Posterior vena cava (tissue), 2 donors: ENCODE measurements at regions of chr7 and their contacts with region 1.

Region 1: DNA sequence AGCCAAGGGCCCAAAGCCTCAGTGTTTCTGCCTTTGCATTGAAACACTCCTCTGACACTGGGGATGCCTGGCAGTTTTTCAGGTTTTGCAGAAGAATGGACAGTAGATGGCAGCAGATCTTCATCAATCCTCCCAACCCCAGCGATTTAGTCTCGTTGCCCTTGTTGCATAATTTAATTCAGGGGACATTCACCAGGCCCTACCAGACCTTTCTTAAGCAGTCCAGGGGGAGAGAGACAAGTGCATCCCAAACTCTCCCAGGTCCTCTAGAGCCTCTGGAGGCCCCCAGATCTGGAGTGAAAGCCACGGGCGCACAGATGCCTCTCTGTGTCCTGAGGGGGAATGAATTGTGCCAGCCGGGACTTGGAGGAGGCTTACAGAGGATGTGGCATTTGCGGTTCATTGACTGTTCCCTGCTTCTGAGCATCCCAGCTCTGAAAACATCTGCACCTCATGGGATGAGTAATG is 29.6 kb downstream of the MINDY4 start:
- DNase-seq: no peak

Region 2: GRCh38 chr7:30750683-30751650 is 49.9 kb before region 1 on chr7:
- intact Hi-C with region 1: loop called in 1 of 2 experiments (anchors 5 kb)
- DNase-seq: peak; percentile 94

Region 3: GRCh38 chr7:30851651-30852307 is 51.0 kb after region 1 on chr7:
- intact Hi-C with region 1: loop called (anchors 5 to 10 kb)
- DNase-seq: peak; percentile 89

Region 4: DNA sequence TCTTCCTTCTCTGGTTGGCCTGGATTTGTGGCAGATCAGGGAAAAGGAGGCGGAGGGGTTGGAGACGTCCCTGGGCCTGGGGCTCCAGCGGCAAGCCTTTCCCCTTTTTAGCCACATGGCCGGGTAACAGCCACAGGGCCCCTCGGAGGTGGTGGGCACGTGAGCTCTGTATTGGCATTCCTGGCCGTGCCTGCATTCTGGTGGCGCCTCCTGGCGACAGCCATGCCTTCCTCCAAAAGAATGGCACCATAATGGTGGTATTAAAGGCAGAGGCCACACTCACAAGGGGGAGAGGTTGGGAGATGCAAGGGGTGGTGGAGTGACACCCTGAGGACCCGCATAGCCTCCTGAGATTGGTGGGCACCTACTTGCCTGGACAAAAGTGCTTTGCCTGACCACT is 107.9 kb after region 1 on chr7:
- intact Hi-C with region 1: loop called in 1 of 2 experiments (anchors 5 kb)
- DNase-seq: no peak

Region 5: DNA sequence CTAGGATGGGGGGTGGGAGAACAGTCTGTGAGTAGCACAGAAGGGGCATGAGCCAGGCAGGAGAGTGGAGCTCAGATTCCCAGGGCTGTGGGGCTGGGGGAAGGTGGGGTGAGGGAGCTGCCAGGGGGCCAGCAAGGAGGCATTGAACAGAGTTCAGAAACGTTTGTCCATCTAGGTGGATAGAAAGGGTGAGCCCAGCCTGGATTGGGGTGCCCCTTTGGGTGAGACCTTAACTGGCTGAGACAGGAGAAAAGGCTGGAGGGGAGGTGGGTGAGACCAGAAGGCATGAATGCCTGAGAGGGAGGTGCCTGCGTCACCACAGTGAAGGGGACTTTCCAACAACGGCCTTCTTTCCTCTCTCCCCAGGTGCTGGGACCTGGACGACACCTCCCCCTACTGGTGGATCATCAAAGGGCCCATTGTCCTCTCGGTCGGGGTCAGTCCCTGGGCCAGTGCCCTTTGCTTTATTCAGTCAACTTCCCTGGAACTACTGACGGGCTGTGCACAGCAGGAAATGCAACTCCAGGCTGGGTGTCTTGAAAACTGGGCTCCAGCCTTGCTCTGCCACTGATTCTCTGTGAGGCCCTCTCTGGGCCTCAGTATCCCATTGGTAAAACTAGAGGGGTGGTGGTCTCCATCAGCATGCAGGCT is 173.9 kb after region 1 on chr7:
- intact Hi-C with region 1: loop called (anchors 2 to 10 kb)
- DNase-seq: peak; percentile 85

Region 6: DNA sequence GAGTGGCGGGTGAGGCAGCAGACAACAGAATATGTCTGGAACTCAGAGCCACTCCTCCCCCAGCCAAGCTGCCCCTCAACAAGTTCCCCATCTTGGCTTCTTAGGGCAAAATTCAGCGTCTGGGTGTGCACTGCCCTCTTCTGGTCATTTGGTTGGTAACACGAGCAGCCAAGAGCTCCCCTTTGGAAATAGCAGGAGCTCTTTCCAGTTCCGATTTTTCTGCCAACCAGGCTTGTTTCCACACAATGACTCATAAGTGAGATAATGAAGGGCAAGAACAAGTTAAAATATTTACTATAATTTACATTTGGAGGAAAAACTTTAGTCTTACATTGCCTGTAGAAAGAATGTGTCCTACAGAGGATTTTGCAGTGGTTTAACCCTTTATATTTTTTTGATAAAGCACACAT is 321.8 kb after region 1 on chr7:
- intact Hi-C with region 1: loop called in 1 of 2 experiments (anchors 10 kb)
- DNase-seq: no peak

Region 7: DNA sequence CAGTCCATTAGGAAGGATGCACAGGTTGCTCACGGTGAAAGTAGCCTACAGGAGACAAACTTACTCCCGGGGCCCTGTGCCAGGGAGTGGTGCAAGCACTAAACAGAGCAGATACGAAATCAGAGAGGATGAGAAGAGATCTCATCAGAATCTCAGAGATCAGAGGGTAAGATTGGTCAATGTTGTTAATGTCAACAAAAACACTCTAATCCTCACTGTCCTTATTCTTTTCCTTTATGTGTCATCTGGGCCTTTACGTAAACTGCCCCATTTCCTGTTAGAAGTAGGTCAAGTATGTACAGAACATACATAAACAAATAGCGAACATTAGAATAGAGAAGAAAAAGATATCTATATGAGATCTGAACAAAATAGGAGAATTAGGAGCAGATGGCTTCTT is 1049.2 kb after region 1 on chr7:
- intact Hi-C with region 1: no loop called
- DNase-seq: no peak